PC-9 (cell line): ENCODE measurements at regions of chr1 and their contacts with region 1.

Region 1: DNA sequence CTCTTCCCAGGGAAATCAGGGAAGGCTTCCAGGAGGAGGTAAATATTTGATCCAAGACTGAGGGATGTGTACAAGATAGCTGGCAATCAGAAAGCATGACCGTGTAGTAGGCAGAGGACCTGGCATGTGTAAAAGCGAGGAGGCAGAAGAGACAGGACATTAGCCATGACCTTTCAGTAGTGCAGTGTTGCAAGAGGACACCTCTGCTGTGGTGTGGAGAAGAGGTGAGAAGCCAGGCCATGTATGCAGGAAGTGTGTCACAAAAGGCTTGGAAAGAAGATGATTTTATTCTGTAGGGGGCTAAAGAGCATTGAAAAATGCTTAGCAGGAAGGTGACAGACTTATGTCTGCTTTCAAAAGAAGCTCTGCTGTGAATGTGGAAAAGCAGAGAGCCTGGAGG is 381.0 kb downstream of the ZP4 start:
- DNase-seq: no peak
- H3K4me3 ChIP-seq: no peak overlapping the region
- H3K27ac ChIP-seq: no peak overlapping the region
- H3K4me1 ChIP-seq: no peaks in the 10 kb centered on the region
- H3K27me3 ChIP-seq: 0 out of 2 replicates have a peak, but pooled peaks cover 7% of the 10 kb centered on the region
- CTCF ChIP-seq: no peak

Region 2: DNA sequence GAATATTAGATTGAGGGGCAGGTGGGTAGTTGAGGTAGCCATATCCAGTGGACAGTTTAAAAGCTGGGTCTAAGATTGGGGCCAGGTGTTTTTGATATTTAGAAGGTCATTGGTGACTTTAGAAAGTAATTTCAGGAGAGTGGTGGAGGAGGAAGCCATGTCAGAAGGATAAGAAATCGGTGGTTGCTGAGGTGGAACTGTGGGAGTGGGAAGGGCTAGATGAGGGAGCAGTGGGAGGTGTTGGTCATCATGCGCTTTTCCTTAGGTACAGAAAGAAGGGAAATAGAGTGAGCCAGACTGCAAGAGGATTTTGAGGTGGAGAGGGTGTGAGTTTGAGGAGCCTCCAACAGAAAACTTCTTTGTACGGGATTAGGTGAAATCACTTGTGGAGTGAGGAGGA is 707.5 kb before region 1 on chr1:
- CTCF ChIA-PET with region 1: no interaction called
- POLR2A ChIA-PET with region 1: interaction called, 10 read pairs
- intact Hi-C with region 1: no loop called
- DNase-seq: no peak
- H3K4me3 ChIP-seq: no peak overlapping the region
- H3K27ac ChIP-seq: no peak overlapping the region
- H3K4me1 ChIP-seq: no peaks in the 10 kb centered on the region
- H3K27me3 ChIP-seq: no peaks in the 10 kb centered on the region
- CTCF ChIP-seq: no peak

Region 3: DNA sequence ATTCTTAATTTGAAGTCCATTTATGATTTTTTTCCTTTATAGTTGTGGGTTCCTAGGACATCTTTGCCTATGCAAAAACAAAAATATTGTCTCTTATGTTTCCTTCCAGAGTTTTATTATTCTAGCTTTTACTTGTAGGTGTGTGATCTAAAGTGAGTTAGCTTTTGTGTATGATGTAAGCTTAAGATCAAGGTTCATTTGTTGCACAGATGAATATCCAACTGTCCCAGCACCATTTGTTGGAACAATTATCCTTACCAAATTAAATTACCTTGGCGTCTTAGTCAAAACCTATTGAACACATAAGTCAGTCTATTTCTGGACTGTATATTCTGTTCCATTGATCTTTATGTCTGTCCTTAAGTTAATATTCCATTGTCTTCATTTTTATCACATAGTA is 43.3 kb after region 1 on chr1:
- CTCF ChIA-PET with region 1: no interaction called
- POLR2A ChIA-PET with region 1: no interaction called
- intact Hi-C with region 1: no loop called
- DNase-seq: no peak
- H3K4me3 ChIP-seq: no peak overlapping the region
- H3K27ac ChIP-seq: no peak overlapping the region
- H3K4me1 ChIP-seq: no peaks in the 10 kb centered on the region
- H3K27me3 ChIP-seq: peaks cover 4% of the 10 kb centered on the region; the same call in 1 of the 2 replicates
- CTCF ChIP-seq: no peak

Region 4: DNA sequence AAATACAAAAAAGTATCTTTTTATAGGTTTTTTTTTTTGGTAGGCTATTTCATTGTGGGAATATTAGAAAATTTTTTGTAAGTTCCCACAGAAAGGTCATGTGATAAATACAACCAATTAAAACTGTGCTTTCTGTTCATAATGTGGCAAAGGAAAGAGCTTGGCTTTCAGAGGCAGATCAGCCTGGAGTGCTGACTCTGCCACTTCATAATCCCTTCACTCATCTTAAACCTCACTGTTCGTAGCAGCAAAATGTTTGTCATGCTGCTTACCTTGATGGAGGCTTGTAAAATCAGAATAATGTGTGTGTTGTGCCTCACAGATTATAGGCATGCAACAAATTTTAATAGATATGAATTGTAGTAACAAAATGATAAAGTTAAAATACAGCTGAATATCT is 204.2 kb after region 1 on chr1:
- CTCF ChIA-PET with region 1: no interaction called
- POLR2A ChIA-PET with region 1: no interaction called
- intact Hi-C with region 1: no loop called
- DNase-seq: no peak
- H3K4me3 ChIP-seq: no peak overlapping the region
- H3K27ac ChIP-seq: no peak overlapping the region
- H3K4me1 ChIP-seq: no peaks in the 10 kb centered on the region
- H3K27me3 ChIP-seq: no peaks in the 10 kb centered on the region
- CTCF ChIP-seq: no peak